ENCODE measurements at regions of chr2 and their contacts with region 1.

Region 1: DNA sequence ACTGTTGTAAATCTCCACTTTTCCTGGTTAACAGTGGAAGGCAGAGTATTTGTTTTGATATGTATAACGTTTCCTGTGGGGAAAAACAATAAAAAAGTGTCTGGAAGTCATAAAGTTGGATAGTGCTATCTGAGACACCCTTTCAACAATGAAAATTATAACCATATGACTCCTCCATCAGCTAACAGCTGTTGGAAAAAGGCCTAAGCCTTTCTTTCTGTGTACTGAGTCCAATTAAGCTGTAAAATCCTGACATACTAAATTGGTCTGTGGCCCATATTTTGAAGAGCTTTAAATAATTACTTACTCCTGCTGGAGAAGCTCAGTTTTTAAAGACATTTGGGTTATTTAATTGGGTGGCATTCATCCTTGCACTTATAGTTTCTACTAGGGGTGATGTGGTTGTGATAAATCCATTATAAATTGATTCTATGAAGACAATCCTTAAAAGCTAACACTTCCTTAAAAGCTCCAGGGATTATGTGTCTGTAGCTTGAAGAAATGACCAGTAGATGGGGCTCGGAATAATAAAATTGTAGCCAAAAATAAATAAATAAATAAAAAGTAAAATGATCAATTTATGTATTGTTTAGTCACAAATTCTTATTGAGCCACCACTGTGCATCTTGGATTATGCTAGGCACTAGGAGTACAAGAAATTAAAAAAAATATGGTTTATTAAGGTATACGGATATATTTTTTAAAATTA is 698.2 kb upstream of the NXPH2 start:
- DNase-seq: no peak
- ATAC-seq: no peak
- H3K4me3 ChIP-seq: no peak overlapping the region
- H3K27ac ChIP-seq: no peak overlapping the region
- H3K4me1 ChIP-seq: no peaks in the 10 kb centered on the region
- H3K27me3 ChIP-seq: no peaks in the 10 kb centered on the region
- CTCF ChIP-seq: no peak
- EP300 ChIP-seq: no peak
- POLR2A ChIP-seq: no peak
- RAD21 ChIP-seq: no peak

Region 2: DNA sequence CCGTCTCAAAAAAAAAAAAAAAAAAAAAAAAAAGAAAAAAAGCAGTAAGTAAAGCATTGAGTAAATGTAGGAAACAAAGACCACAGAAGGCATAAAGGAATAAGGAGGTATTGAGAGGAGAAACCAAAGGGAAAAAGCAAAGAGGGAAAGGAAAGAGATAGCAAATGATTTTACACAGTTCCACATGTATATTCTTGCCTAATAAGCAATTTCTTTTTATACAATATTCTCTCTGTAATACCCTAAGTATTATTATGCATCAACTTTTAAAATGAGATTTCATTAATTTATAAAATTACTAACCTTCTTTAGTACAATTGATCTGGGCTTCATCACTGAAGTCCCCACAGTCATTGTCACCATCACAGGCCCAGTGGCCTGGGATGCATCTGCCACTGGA is 1471.6 kb after region 1 on chr2:
- CTCF ChIA-PET with region 1: no interaction called
- POLR2A ChIA-PET with region 1: no interaction called
- RAD21 ChIA-PET with region 1: no interaction called
- SMC1A ChIA-PET with region 1: no interaction called
- in situ Hi-C with region 1: no loop called
- intact Hi-C with region 1: loop called (anchors 5 kb)
- DNase-seq: no peak
- ATAC-seq: no peak
- H3K4me3 ChIP-seq: no peak overlapping the region
- H3K27ac ChIP-seq: no peak overlapping the region
- H3K4me1 ChIP-seq: no peaks in the 10 kb centered on the region
- H3K27me3 ChIP-seq: no peaks in the 10 kb centered on the region; a peak in 1 of 4 replicates
- CTCF ChIP-seq: no peak
- EP300 ChIP-seq: no peak
- POLR2A ChIP-seq: no peak
- RAD21 ChIP-seq: no peak

Measured in GM12878 (cell line).